ENCODE measurements at regions of chr7 and their contacts with region 1.

Region 1: GRCh38 chr7:138886501-138886917 is 88.5 kb upstream of the ATP6V0A4 start:
- DNase-seq: peak in 3 of 4 donors; percentile 26 to 61 (median 35)
- ATAC-seq: peak; percentile 53
- H3K4me3 ChIP-seq: no peak overlapping the region
- H3K27ac ChIP-seq: no peak overlapping the region
- H3K4me1 ChIP-seq: peaks cover 10% of the 10 kb centered on the region
- H3K27me3 ChIP-seq: no peaks in the 10 kb centered on the region
- CTCF ChIP-seq: peak in 6 of 7 experiments; percentile 47 to 83 (median 81)
- POLR2A ChIP-seq: no peak

Region 2: DNA sequence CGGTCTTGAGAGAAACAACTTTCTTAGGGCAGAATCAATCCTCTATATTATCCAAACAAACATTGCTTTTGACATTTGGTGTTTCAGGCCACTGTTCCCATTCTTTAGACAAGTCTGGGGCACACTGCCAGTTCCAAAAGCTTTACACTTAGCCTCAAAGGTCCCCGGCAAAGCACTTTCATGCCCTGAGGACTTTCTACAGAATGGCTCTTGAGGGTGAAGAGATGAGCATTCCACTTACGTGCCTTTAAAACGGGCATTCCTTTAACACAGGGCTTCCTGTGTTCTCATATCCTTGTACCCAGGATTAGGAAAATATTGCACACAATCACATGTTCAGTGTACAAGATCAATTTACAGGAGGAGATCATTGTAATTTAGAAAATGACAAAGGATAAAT is 101.8 kb before region 1 on chr7:
- intact Hi-C with region 1: no loop called
- DNase-seq: no peak
- ATAC-seq: no peak
- H3K4me3 ChIP-seq: no peak overlapping the region
- H3K27ac ChIP-seq: no peak overlapping the region
- H3K4me1 ChIP-seq: no peaks in the 10 kb centered on the region
- H3K27me3 ChIP-seq: no peaks in the 10 kb centered on the region
- CTCF ChIP-seq: no peak
- POLR2A ChIP-seq: no peak

Region 3: GRCh38 chr7:138799336-138800005 is 87.0 kb before region 1 on chr7:
- intact Hi-C with region 1: no loop called
- DNase-seq: no peak
- ATAC-seq: no peak
- H3K4me3 ChIP-seq: no peak overlapping the region
- H3K27ac ChIP-seq: no peak overlapping the region
- H3K4me1 ChIP-seq: no peaks in the 10 kb centered on the region
- H3K27me3 ChIP-seq: no peaks in the 10 kb centered on the region
- CTCF ChIP-seq: no peak
- POLR2A ChIP-seq: no peak

Region 4: DNA sequence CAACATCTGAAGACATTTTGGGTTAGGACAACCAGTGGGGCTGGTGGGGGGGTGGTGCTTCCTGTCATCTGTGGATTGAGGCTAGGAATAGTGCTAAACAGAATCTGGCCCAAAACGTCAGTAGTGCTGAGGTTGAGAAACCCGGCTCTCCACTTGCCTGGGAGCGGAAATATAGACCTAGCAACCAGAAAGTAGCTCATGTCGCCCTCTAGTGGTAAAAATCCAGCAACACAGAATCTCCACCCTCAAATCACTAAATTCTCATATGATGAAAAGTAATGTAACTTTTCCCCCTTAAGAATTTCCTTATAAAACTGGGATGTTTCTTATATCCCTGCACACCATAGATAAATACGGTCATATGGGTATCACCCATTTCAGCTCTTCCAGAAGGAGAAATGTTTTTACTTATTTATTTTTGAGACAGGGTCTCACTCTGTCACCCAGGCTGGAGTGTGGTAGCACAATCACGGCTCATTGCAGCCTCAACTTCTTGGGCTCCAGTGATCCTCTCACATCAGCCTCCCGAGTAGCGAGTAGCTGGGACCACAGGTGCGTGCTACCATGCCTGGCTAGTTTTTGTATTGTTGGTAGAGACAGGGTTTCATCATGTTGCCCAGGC is 188.6 kb after region 1 on chr7:
- intact Hi-C with region 1: loop called (anchors 5 kb)
- DNase-seq: peak; percentile 66 to 84 (median 74)
- ATAC-seq: peak; percentile 88
- H3K4me3 ChIP-seq: no peak overlapping the region
- H3K27ac ChIP-seq: peak overlapping the region in 1 of 4 donors; percentile 27
- H3K4me1 ChIP-seq: no peaks in the 10 kb centered on the region
- H3K27me3 ChIP-seq: no peaks in the 10 kb centered on the region
- CTCF ChIP-seq: peak; percentile 63 to 91 (median 82)
- POLR2A ChIP-seq: no peak

Region 5: GRCh38 chr7:139777948-139778841 is 891.7 kb after region 1 on chr7 and contains the start of gene HIPK2:
- intact Hi-C with region 1: no loop called
- DNase-seq: peak; percentile 73 to 87 (median 78)
- ATAC-seq: peak; percentile 79
- H3K4me3 ChIP-seq: peak within 1 kb of the TSS; percentile 65 to 71
- H3K27ac ChIP-seq: peak within 1 kb of the TSS; percentile 90 to 97 (median 94)
- H3K4me1 ChIP-seq: peaks cover 30% of the 10 kb centered on the region
- H3K27me3 ChIP-seq: no peaks in the 10 kb centered on the region
- CTCF ChIP-seq: no peak
- POLR2A ChIP-seq: no peak
- total RNA-seq, gene HIPK2: 22.1 to 26.4 TPM